ENCODE measurements at regions of chr21 and their contacts with region 1.

Region 1: GRCh38 chr21:15408089-15408488 is 321.7 kb upstream of the USP25 start:
- DNase-seq: no peak
- ATAC-seq: no peak
- H3K4me3 ChIP-seq: no peak overlapping the region
- H3K27ac ChIP-seq: no peak overlapping the region
- H3K4me1 ChIP-seq: peaks cover 0 to 7% of the 10 kb centered on the region in 2 donors
- H3K27me3 ChIP-seq: no peaks in the 10 kb centered on the region
- CTCF ChIP-seq: no peak
- POLR2A ChIP-seq: no peak

Region 2: DNA sequence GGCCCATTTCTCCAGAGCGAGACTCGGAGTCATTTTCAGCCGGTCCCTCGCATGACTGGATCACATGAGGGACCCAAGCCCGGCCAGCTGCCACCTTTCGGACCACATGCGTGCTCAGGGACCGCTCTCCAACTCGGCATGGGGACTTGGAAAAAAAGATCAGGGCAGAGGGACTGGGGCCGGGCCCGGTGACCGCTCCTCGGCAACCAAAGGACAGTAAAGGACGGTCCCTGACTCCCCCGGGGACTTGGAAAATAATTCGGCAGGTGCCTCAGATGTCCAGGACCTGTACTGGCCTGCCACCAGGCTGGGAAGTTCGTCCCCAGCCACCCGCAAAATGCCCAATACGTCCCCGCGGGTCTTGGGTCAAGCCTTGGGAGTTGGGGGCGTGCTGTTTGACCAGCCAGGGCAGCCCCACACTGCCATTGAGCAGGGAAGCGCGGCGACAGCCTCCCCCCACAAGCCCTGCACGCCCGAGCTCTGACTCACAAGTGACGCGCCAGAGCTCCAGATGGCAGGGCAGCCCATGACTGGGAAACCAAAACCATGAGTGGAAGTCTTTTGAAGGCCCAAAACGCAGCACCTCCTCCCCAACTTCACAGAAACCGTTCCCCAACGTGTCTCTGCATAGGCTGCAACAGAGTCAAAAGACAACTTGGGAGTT is 1331.8 kb before region 1 on chr21:
- in situ Hi-C with region 1: no loop called
- intact Hi-C with region 1: no loop called
- DNase-seq: no peak
- ATAC-seq: no peak
- H3K4me3 ChIP-seq: no peak overlapping the region
- H3K27ac ChIP-seq: no peak overlapping the region
- H3K4me1 ChIP-seq: no peaks in the 10 kb centered on the region
- H3K27me3 ChIP-seq: no peaks in the 10 kb centered on the region
- CTCF ChIP-seq: no peak
- POLR2A ChIP-seq: no peak

Region 3: GRCh38 chr21:15343066-15343465 is 65.0 kb before region 1 on chr21:
- in situ Hi-C with region 1: loop called in 1 of 4 experiments (anchors 10 kb)
- intact Hi-C with region 1: no loop called
- DNase-seq: no peak
- ATAC-seq: no peak
- H3K4me3 ChIP-seq: no peak overlapping the region
- H3K27ac ChIP-seq: no peak overlapping the region
- H3K4me1 ChIP-seq: no peaks in the 10 kb centered on the region
- H3K27me3 ChIP-seq: no peaks in the 10 kb centered on the region
- CTCF ChIP-seq: no peak
- POLR2A ChIP-seq: no peak

Region 4: DNA sequence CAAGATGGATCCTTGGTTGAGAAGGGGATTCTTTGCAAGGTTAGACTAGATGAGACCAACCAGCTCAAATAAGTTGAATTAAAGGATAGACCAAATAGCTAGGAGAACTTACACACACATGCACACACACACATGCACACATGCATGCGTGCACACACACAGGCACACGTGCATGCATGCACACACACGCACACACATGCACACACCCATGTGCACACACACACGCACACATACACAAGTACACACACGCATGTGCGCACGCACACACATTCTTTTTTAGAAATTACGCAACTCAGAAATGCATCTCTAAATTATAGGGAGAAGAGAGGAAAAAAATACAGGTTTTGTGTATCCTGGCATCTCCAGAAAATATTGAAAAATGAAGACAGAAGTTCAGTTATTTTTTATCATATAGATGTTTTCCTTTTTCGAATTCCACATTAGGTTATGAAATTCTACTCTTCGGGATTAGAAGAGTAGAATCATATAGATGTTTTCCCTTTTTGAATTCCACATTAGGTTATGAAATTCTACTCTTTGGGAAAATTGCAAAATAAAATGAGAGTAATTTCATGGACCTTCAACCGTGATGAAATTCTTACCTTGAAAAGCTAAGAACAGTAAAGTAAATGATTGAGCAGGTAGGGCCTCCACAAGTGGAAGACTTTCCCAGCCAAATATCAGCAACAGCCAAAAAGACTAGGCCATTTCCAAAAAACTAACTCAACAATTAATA is 78.5 kb after region 1 on chr21:
- in situ Hi-C with region 1: no loop called
- intact Hi-C with region 1: no loop called
- DNase-seq: no peak
- ATAC-seq: no peak
- H3K4me3 ChIP-seq: no peak overlapping the region
- H3K27ac ChIP-seq: no peak overlapping the region
- H3K4me1 ChIP-seq: peaks cover 0 to 10% of the 10 kb centered on the region in 2 donors
- H3K27me3 ChIP-seq: no peaks in the 10 kb centered on the region
- CTCF ChIP-seq: no peak
- POLR2A ChIP-seq: no peak

Region 5: DNA sequence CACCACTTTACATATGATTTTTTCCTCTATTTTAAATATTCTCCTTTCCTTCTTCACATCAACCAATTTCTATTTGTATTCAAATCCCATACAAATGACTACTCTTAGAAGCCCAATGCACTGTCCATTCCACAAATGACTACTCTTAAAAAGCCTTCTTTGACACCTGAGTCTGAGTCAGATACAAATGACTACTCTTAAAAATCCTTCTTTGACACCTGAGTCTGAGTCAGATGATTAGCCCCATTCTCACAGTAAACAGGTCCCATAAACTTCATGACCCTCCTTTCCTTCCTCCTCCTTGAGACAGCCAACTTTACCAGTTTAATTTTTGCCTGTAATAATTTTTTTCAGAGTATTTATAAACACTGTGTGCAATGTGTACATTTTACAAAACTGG is 90.4 kb after region 1 on chr21:
- in situ Hi-C with region 1: no loop called
- intact Hi-C with region 1: no loop called
- DNase-seq: no peak
- ATAC-seq: no peak
- H3K4me3 ChIP-seq: no peak overlapping the region
- H3K27ac ChIP-seq: no peak overlapping the region
- H3K4me1 ChIP-seq: no peaks in the 10 kb centered on the region
- H3K27me3 ChIP-seq: no peaks in the 10 kb centered on the region
- CTCF ChIP-seq: no peak
- POLR2A ChIP-seq: no peak

Region 6: GRCh38 chr21:15749082-15749860 is 341.2 kb after region 1 on chr21:
- in situ Hi-C with region 1: no loop called
- intact Hi-C with region 1: no loop called
- DNase-seq: no peak
- ATAC-seq: no peak
- H3K4me3 ChIP-seq: peak overlapping the region in 1 of 4 donors; percentile 3
- H3K27ac ChIP-seq: peak overlapping the region in 1 of 4 donors; percentile 9
- H3K4me1 ChIP-seq: peaks cover 68 to 69% of the 10 kb centered on the region in 2 donors
- H3K27me3 ChIP-seq: no peaks in the 10 kb centered on the region
- CTCF ChIP-seq: no peak
- POLR2A ChIP-seq: no peak